GM12878 (cell line): ENCODE measurements at regions of chr14 and their contacts with region 1.

Region 1: DNA sequence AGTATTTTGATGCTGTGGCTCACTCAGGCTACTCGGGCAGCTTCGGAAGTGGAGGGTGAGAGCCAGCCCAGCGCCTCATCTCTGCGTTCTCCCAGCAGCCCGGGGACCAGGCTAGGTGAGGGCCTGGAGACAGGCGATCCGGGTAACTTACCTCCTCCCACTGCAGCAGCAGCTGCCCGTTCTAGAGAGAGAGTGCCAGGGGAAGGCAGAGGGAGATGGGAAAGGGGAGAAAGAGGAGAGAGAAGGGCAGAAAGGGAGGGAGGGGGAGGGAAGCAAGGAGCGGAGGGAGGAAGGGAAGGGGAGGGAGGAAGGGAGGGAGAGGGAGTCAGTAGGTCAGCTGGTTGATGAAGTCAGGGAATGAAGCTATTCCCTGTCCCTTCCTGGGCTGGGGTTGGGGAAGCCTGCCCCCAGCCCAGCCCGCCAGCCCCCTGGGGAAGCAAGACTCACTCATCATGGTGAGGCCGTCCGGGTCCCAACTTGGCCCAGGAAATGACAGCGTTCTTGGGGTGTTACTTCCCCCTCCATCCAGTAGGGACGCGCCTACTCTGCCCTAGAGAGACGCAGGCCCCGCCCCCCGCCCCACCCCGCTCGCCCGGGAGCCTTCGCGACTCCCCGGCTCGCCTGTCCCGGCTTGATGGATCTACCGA is at the start of gene IFI27L2:
- DNase-seq: no peak
- ATAC-seq: peak; percentile 98
- H3K4me3 ChIP-seq: peak within 1 kb of the TSS; percentile 99
- H3K27ac ChIP-seq: peak within 1 kb of the TSS; percentile 67
- H3K4me1 ChIP-seq: peaks cover 10% of the 10 kb centered on the region; the same call in 1 of the 2 replicates
- H3K27me3 ChIP-seq: peaks cover 0 to 4% of the 10 kb centered on the region in 2 experiments; a peak in 1 of 4 replicates
- CTCF ChIP-seq: peak; percentile 4 to 46 (median 11); a peak in 1 of 6 replicates
- EP300 ChIP-seq: no peak
- POLR2A ChIP-seq: peak; percentile 82
- RAD21 ChIP-seq: no peak
- polyA plus RNA-seq, gene IFI27L2: 26.6 to 61.2 TPM

Region 2: GRCh38 chr14:94036313-94037050 is 92.8 kb before region 1 on chr14:
- CTCF ChIA-PET with region 1: interaction called, 63 read pairs
- POLR2A ChIA-PET with region 1: no interaction called
- RAD21 ChIA-PET with region 1: interaction called, 18 read pairs
- SMC1A ChIA-PET with region 1: interaction called, 39 read pairs
- in situ Hi-C with region 1: no loop called
- intact Hi-C with region 1: no loop called
- DNase-seq: no peak
- ATAC-seq: peak; percentile 99
- H3K4me3 ChIP-seq: no peak overlapping the region
- H3K27ac ChIP-seq: no peak overlapping the region
- H3K4me1 ChIP-seq: no peaks in the 10 kb centered on the region
- H3K27me3 ChIP-seq: 0 out of 4 replicates have a peak, but pooled peaks cover 0 to 5% of the 10 kb centered on the region in 2 experiments
- CTCF ChIP-seq: peak; percentile 87 to 89 (median 88)
- EP300 ChIP-seq: no peak
- POLR2A ChIP-seq: no peak
- RAD21 ChIP-seq: peak; percentile 66

Region 3: DNA sequence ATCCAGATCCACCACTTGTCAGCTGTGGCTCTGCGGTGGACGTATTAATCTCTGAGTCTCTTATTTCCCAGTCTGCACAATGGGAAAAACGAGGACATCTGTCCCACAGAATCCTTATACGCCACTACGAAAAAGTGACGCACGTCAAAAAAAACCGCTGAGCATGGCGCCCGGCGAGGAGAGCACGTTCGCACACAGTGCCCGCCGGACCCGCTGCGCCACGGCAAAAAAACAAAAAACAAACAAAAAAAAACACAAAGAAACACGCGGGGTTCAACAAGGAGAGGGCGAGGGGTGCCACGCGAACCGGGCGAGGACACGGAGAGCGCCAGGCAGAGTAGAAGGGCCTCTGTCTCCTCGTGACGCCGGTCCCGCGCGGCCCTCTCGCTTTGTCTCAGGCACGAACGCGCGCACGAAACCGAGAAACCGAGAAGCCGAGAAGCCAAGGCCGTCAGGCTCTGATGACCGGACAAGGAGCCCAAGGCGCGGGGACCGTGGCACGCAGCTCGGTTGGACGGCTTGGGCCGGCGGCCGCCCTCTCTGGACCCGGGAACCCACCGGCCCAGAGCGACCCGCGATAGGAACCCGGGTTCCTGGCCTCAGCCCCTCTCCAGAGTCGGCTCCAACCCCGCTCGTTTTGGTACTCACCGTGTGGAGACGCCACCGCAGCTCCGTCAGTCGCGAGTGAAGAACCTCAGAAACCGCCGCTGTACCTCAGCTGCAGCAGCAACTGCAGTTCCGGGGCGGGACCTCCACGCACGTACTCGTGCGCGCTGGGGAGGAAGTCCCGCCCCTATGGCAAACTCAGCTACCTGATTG is 48.6 kb before region 1 on chr14 and contains the start of gene DDX24:
- CTCF ChIA-PET with region 1: interaction called, 11 read pairs
- POLR2A ChIA-PET with region 1: interaction called, 6 read pairs
- RAD21 ChIA-PET with region 1: interaction called, 3 read pairs
- SMC1A ChIA-PET with region 1: interaction called, 10 read pairs
- in situ Hi-C with region 1: no loop called
- intact Hi-C with region 1: no loop called
- DNase-seq: peak; percentile 85
- ATAC-seq: peak; percentile 96
- H3K4me3 ChIP-seq: peak within 1 kb of the TSS; percentile 72
- H3K27ac ChIP-seq: peak within 1 kb of the TSS; percentile 96
- H3K4me1 ChIP-seq: peaks cover 3% of the 10 kb centered on the region
- H3K27me3 ChIP-seq: no peaks in the 10 kb centered on the region
- CTCF ChIP-seq: no peak
- EP300 ChIP-seq: no peak
- POLR2A ChIP-seq: peak; percentile 98
- RAD21 ChIP-seq: no peak
- polyA plus RNA-seq, gene DDX24: 137 to 176 TPM

Region 4: GRCh38 chr14:94180655-94181271 is 51.5 kb after region 1 on chr14:
- CTCF ChIA-PET with region 1: interaction called, 58 read pairs
- POLR2A ChIA-PET with region 1: no interaction called
- RAD21 ChIA-PET with region 1: interaction called, 3 read pairs
- SMC1A ChIA-PET with region 1: interaction called, 5 read pairs
- in situ Hi-C with region 1: no loop called
- intact Hi-C with region 1: no loop called
- DNase-seq: peak; percentile 20
- ATAC-seq: peak; percentile 92
- H3K4me3 ChIP-seq: peak overlapping the region; percentile 31; the same call in 1 of the 2 replicates
- H3K27ac ChIP-seq: no peak overlapping the region
- H3K4me1 ChIP-seq: no peaks in the 10 kb centered on the region
- H3K27me3 ChIP-seq: peaks cover 0 to 11% of the 10 kb centered on the region in 2 experiments; a peak in 2 of 4 replicates
- CTCF ChIP-seq: peak; percentile 44 to 60 (median 53); a peak in 5 of 6 replicates
- EP300 ChIP-seq: no peak
- POLR2A ChIP-seq: no peak
- RAD21 ChIP-seq: peak; percentile 64